CD4-positive, alpha-beta T cell (primary cell): ENCODE measurements at regions of chr17 and their contacts with region 1.

Region 1: GRCh38 chr17:50719144-50719923 is at the start of gene LUC7L3:
- DNase-seq: peak; percentile 84 to 96 (median 90)
- ATAC-seq: peak; percentile 91
- H3K4me3 ChIP-seq: peak within 1 kb of the TSS; percentile 79
- H3K4me3 Mint-ChIP-seq: peak within 1 kb of the TSS; percentile 95
- H3K27ac ChIP-seq: peak within 1 kb of the TSS; percentile 89 to 97
- H3K27ac Mint-ChIP-seq: peak within 1 kb of the TSS; percentile 86
- H3K4me1 ChIP-seq: peaks cover 27% of the 10 kb centered on the region
- H3K4me1 Mint-ChIP-seq: peaks cover 34% of the 10 kb centered on the region
- H3K27me3 ChIP-seq: no peaks in the 10 kb centered on the region
- H3K27me3 Mint-ChIP-seq: no peaks in the 10 kb centered on the region
- CTCF ChIP-seq: no peak
- total RNA-seq, gene LUC7L3: 116 to 126 TPM

Region 2: DNA sequence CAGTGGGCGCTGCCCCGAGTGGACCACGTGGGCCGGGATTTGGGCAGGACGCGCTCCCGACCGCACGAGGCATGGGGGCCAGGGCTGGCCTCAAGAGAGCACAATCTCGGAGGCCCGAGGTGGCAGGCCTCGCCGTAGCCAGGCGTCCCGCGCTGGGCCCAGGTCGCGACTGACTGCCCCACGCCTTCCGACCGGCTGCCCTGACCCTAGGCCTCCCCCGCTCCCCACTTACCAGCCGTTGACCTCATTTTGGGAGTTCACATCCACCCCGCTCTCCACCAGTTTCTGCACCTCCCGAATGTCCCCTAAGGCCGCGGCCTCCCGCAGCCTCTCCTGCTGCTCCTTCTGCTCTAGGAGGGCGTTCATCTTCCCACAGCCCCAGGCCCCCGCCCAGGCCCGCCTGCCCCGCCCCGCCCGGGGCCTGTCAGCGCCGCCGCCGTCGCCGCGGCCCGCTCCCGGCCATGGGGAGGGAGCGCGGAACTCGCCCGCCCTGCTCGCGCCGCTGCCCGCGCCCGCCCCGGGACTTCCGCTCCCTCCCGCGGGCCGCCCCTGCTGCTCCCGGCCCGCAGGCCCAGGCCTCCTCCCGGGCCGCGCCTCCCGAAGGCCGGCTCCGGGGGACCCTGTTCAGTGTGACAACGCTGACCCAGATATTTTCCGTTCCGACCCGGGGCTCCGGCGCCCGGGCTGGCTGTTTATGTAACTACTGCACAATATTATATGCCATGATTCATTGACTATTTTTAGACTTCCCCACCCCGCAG is 11.9 kb before region 1 on chr17 and contains the start of gene ANKRD40:
- CTCF ChIA-PET with region 1: interaction called, 4 read pairs
- POLR2A ChIA-PET with region 1: interaction called, 82 read pairs
- intact Hi-C with region 1: loop called (anchors 1 kb)
- DNase-seq: peak; percentile 82 to 95 (median 89)
- ATAC-seq: peak; percentile 80
- H3K4me3 ChIP-seq: peak within 1 kb of the TSS; percentile 75
- H3K4me3 Mint-ChIP-seq: peak within 1 kb of the TSS; percentile 99
- H3K27ac ChIP-seq: peak within 1 kb of the TSS; percentile 84 to 95
- H3K27ac Mint-ChIP-seq: peak within 1 kb of the TSS; percentile 97
- H3K4me1 ChIP-seq: peaks cover 41% of the 10 kb centered on the region
- H3K4me1 Mint-ChIP-seq: peaks cover 44% of the 10 kb centered on the region
- H3K27me3 ChIP-seq: no peaks in the 10 kb centered on the region
- H3K27me3 Mint-ChIP-seq: no peaks in the 10 kb centered on the region
- CTCF ChIP-seq: no peak
- total RNA-seq, gene ANKRD40: 22.8 to 24.0 TPM